Natural killer cell (primary cell): ENCODE measurements at regions of chr14 and their contacts with region 1.

Region 1: GRCh38 chr14:51979088-51979709 is 10.1 kb upstream of the RTRAF start:
- DNase-seq: peak; percentile 79 to 90
- ATAC-seq: peak; percentile 79 to 98 (median 86)
- H3K4me3 ChIP-seq: no peak overlapping the region
- H3K4me3 Mint-ChIP-seq: no peak overlapping the region
- H3K27ac ChIP-seq: no peak overlapping the region
- H3K27ac Mint-ChIP-seq: no peak overlapping the region
- H3K4me1 ChIP-seq: peaks cover 7% of the 10 kb centered on the region
- H3K4me1 Mint-ChIP-seq: peaks cover 12 to 17% of the 10 kb centered on the region in 2 donors
- H3K27me3 ChIP-seq: no peaks in the 10 kb centered on the region
- H3K27me3 Mint-ChIP-seq: no peaks in the 10 kb centered on the region
- CTCF ChIP-seq: peak; percentile 92

Region 2: GRCh38 chr14:51283402-51284085 is 695.7 kb before region 1 on chr14:
- intact Hi-C with region 1: loop called (anchors 5 kb)
- DNase-seq: peak in 1 of 2 donors; percentile 65
- ATAC-seq: peak; percentile 60 to 67 (median 62)
- H3K4me3 ChIP-seq: no peak overlapping the region
- H3K4me3 Mint-ChIP-seq: no peak overlapping the region
- H3K27ac ChIP-seq: no peak overlapping the region
- H3K27ac Mint-ChIP-seq: no peak overlapping the region
- H3K4me1 ChIP-seq: no peaks in the 10 kb centered on the region
- H3K4me1 Mint-ChIP-seq: no peaks in the 10 kb centered on the region
- H3K27me3 ChIP-seq: no peaks in the 10 kb centered on the region
- H3K27me3 Mint-ChIP-seq: no peaks in the 10 kb centered on the region
- CTCF ChIP-seq: peak; percentile 84

Region 3: GRCh38 chr14:51666826-51667225 is 312.4 kb before region 1 on chr14:
- intact Hi-C with region 1: no loop called
- DNase-seq: no peak
- ATAC-seq: no peak
- H3K4me3 ChIP-seq: no peak overlapping the region
- H3K4me3 Mint-ChIP-seq: no peak overlapping the region
- H3K27ac ChIP-seq: no peak overlapping the region
- H3K27ac Mint-ChIP-seq: no peak overlapping the region
- H3K4me1 ChIP-seq: no peaks in the 10 kb centered on the region
- H3K4me1 Mint-ChIP-seq: no peaks in the 10 kb centered on the region
- H3K27me3 ChIP-seq: peaks cover 2% of the 10 kb centered on the region
- H3K27me3 Mint-ChIP-seq: peaks cover 4 to 18% of the 10 kb centered on the region in 2 donors
- CTCF ChIP-seq: no peak

Region 4: GRCh38 chr14:51929906-51930682 is 49.1 kb before region 1 on chr14:
- intact Hi-C with region 1: loop called (anchors 5 kb)
- DNase-seq: peak in 1 of 2 donors; percentile 32
- ATAC-seq: peak; percentile 62 to 76 (median 68)
- H3K4me3 ChIP-seq: no peak overlapping the region
- H3K4me3 Mint-ChIP-seq: peak overlapping the region; percentile 86
- H3K27ac ChIP-seq: peak overlapping the region; percentile 63
- H3K27ac Mint-ChIP-seq: peak overlapping the region; percentile 93 to 94
- H3K4me1 ChIP-seq: peaks cover 57% of the 10 kb centered on the region
- H3K4me1 Mint-ChIP-seq: peaks cover 75 to 78% of the 10 kb centered on the region in 2 donors
- H3K27me3 ChIP-seq: no peaks in the 10 kb centered on the region
- H3K27me3 Mint-ChIP-seq: no peaks in the 10 kb centered on the region
- CTCF ChIP-seq: no peak